PC-3 (cell line): ENCODE measurements at regions of chr5 and their contacts with region 1.

Region 1: DNA sequence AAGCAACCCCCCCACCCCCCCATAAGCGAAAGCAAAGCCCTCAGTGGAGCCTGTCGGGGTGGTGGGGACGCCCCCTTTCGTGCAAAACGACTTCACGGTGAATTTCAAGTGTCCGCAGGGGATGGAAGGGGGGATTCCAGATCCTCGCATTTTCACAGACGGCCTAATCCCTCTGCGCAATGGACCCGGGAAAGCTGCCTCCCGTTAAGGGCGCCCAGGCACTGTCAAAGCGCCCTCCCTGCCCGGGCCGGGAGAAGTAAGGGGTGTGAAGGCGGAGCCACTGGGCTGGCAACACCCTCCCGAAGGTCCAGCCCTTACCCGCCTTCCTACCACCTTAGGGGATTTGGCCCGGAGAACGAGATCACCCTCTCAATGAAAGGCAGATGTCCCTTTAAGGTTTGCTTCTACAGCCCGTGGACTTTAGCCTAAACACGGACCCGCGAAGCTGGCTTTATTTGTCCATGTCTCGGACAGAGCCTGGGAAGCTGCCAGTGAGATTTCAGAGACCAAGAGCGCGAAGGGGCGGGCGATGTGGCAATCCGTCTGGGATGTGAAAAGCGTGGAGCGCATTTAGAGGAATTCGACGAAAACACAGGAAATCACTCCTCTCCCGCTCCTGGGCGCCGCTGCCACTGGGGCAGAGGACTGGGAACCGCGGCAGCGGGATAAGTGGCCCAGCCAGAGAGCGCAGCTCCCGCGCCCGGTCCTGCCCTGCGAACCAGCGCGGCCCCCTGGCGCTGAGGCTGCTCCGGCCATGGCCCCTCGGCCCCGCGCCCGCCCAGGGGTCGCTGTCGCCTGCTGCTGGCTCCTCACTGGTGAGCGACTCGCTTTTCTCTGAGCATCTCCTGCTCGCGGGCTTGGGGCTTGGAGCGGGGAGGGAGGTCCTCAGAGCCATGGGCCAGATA is at the starts of genes ITGA1 and PELO:
- DNase-seq: peak; percentile 62
- ATAC-seq: peak; percentile 68
- H3K4me3 ChIP-seq: peak within 1 kb of the TSS; percentile 77
- H3K27ac ChIP-seq: peak within 1 kb of the TSS; percentile 85
- H3K4me1 ChIP-seq: peaks cover 48% of the 10 kb centered on the region
- H3K27me3 ChIP-seq: no peaks in the 10 kb centered on the region
- CTCF ChIP-seq: peak; percentile 39; the same call in 1 of the 2 replicates
- total RNA-seq, gene ITGA1: 3.4 and 4.7 TPM in 2 replicates
- total RNA-seq, gene PELO: 33.6 and 45.3 TPM in 2 replicates

Region 2: DNA sequence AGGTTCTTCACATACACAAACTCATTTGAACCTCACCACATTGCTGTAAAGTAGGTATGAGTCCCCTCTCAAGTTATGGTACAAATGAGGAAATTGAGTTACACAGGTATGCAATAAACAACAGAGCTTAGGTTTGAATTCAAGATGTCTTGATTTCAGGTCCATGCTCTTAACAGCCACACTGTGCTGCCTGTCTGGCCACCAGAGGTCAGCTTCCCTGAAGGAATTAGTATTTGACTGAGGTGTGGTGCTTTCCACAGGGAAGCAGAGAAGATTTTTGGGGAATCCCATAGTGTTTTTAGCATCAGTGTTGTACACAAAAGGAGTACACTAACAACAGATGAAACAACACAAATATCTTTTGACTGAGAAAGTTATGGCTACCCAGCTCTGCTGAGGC is 94.6 kb before region 1 on chr5:
- CTCF ChIA-PET with region 1: interaction called, 3 read pairs
- POLR2A ChIA-PET with region 1: no interaction called
- intact Hi-C with region 1: loop called (anchors 1 kb)
- DNase-seq: peak; percentile 49
- ATAC-seq: peak; percentile 83
- H3K4me3 ChIP-seq: no peak overlapping the region
- H3K27ac ChIP-seq: no peak overlapping the region
- H3K4me1 ChIP-seq: peaks cover 6% of the 10 kb centered on the region; the same call in 1 of the 2 replicates
- H3K27me3 ChIP-seq: peaks cover 3% of the 10 kb centered on the region; the same call in 1 of the 2 replicates
- CTCF ChIP-seq: peak; percentile 79

Region 3: GRCh38 chr5:52727568-52727967 is 60.3 kb before region 1 on chr5:
- CTCF ChIA-PET with region 1: no interaction called
- POLR2A ChIA-PET with region 1: interaction called, 3 read pairs
- intact Hi-C with region 1: loop called (anchors 2 kb)
- DNase-seq: peak; percentile 84
- ATAC-seq: peak; percentile 97
- H3K4me3 ChIP-seq: no peak overlapping the region
- H3K27ac ChIP-seq: peak overlapping the region; percentile 100
- H3K4me1 ChIP-seq: peaks cover 36% of the 10 kb centered on the region
- H3K27me3 ChIP-seq: no peaks in the 10 kb centered on the region
- CTCF ChIP-seq: no peak

Region 4: DNA sequence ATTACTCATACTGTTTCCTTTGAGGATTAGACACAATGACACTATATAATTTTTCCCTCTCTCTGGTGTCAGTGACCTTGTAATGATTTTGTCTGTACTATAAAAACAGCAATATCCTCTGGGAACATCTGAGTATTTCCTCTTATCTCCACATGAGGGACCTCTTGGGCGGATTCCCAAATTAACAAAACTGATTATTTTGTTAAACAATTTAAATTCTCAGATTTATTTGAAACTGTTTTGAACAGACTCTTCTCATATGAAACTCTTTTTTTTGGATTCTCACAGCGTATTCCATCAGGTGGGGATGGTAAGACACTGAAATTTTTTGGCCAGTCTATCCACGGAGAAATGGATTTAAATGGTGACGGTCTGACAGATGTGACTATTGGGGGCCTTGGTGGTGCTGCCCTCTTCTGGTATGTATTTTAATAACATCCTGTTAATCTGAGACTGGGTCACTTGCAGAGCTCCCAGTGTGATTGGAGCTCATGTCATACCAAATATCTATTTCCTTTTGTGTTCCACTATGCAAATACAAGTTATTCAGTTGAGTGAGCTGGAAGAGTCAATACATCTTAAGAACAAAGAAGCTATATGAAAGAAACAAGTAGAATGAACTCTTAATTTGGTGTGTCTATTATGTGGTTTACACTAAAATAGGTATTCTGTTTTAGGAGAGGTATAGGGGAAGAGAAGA is 127.5 kb after region 1 on chr5:
- CTCF ChIA-PET with region 1: interaction called, 8 read pairs
- POLR2A ChIA-PET with region 1: interaction called, 3 read pairs
- intact Hi-C with region 1: loop called (anchors 1 kb)
- DNase-seq: peak; percentile 76
- ATAC-seq: peak; percentile 97
- H3K4me3 ChIP-seq: peak overlapping the region; percentile 55
- H3K27ac ChIP-seq: 0 out of 2 replicates have a peak overlapping the region, but pooled peaks have one; percentile 14
- H3K4me1 ChIP-seq: no peaks in the 10 kb centered on the region
- H3K27me3 ChIP-seq: no peaks in the 10 kb centered on the region
- CTCF ChIP-seq: peak; percentile 89

Region 5: DNA sequence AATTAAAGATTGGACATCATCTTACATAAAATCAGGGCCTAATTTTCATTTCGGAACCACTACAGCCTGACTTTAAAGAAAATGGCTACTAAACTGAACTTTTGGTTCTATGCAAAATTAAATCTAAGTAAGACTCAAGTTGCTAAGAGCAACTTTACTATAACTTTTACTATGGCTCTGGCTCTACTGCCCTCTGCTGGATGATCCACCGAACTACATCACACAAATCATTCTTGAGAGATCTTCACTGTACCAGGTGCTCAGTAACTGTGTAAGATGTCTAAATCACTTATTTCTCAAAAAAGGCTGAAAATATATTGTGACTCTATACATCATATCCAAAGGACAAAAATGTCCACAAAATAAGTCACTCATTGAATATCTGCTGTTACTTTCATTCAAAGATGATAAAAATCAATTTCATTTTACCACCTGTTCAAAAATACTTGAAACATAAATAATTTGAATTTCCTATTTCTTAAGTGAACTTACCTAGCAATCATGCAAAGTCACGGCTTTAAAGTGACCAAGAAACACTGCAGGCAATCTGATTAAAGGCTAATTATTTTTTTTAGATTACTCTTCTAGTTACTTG is 308.2 kb after region 1 on chr5:
- CTCF ChIA-PET with region 1: no interaction called
- POLR2A ChIA-PET with region 1: no interaction called
- intact Hi-C with region 1: loop called (anchors 10 kb)
- DNase-seq: peak; percentile 80
- ATAC-seq: peak; percentile 41
- H3K4me3 ChIP-seq: no peak overlapping the region
- H3K27ac ChIP-seq: no peak overlapping the region
- H3K4me1 ChIP-seq: peaks cover 8% of the 10 kb centered on the region; the same call in 1 of the 2 replicates
- H3K27me3 ChIP-seq: no peaks in the 10 kb centered on the region
- CTCF ChIP-seq: peak; percentile 87